ENCODE measurements at regions of chr17 and their contacts with region 1.

Region 1: DNA sequence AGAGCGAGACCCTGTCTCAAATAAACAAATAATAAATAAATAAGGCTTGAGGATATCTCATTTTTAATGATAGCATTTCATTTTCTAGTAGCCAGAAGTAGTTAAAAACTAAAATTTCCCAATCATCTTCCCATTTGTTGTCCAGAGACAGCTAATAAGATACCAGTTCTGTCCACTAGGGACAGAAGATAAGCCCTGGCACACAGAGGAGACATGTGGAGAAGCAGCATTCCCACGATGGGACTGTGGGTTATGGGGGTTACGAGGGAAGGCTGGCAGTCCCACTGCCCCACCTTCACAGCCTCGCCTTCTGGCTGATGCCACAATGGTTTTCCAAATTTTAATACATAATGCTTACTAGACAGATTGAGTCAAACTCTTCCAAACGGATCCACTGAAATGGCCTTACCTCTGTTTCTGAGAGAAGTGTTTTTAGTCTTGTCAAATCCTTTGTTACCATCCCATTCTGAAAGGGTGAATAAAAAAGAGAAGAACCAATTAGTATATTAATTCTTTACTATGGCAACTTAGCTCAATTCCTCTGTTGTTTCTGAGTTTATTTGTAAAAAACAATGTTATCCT is 44.2 kb downstream of the HELZ start:
- DNase-seq: no peak
- ATAC-seq: peak; percentile 67
- H3K4me3 ChIP-seq: no peak overlapping the region
- H3K27ac ChIP-seq: no peak overlapping the region
- H3K4me1 ChIP-seq: no peaks in the 10 kb centered on the region
- H3K27me3 ChIP-seq: no peaks in the 10 kb centered on the region
- CTCF ChIP-seq: peak; percentile 9 to 55 (median 39); a peak in 5 of 6 replicates
- EP300 ChIP-seq: no peak
- POLR2A ChIP-seq: no peak
- RAD21 ChIP-seq: no peak

Region 2: GRCh38 chr17:67210915-67211314 is 10.1 kb after region 1 on chr17:
- CTCF ChIA-PET with region 1: interaction called, 10 read pairs
- POLR2A ChIA-PET with region 1: interaction called, 3 read pairs
- RAD21 ChIA-PET with region 1: no interaction called
- SMC1A ChIA-PET with region 1: interaction called, 11 read pairs
- in situ Hi-C with region 1: no loop called
- intact Hi-C with region 1: no loop called
- DNase-seq: no peak
- ATAC-seq: no peak
- H3K4me3 ChIP-seq: no peak overlapping the region
- H3K27ac ChIP-seq: no peak overlapping the region
- H3K4me1 ChIP-seq: no peaks in the 10 kb centered on the region
- H3K27me3 ChIP-seq: no peaks in the 10 kb centered on the region
- CTCF ChIP-seq: no peak
- EP300 ChIP-seq: no peak
- POLR2A ChIP-seq: no peak
- RAD21 ChIP-seq: no peak

Region 3: DNA sequence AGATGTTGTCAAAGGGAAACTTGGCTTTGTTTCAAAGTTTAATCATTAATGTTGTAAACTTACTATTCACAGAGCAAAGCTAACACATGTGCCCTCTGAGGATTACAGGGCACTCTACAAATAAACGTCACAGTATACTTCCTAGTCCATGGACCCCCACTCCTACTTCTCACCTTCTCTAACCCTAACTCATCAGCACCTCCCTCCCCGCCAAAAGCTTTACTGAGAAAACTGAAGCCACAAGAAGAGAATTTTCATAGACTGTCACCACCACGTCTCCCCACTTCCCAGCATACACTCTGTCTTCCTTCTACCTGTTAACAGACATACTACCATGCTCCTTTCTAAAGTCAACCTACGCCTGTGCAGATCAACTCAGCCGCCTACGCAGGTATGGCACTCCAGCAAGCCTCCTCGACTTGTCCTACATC is 15.2 kb after region 1 on chr17:
- CTCF ChIA-PET with region 1: interaction called, 10 read pairs
- POLR2A ChIA-PET with region 1: interaction called, 3 read pairs
- RAD21 ChIA-PET with region 1: no interaction called
- SMC1A ChIA-PET with region 1: interaction called, 11 read pairs
- in situ Hi-C with region 1: no loop called
- intact Hi-C with region 1: no loop called
- DNase-seq: no peak
- ATAC-seq: peak; percentile 58
- H3K4me3 ChIP-seq: no peak overlapping the region
- H3K27ac ChIP-seq: no peak overlapping the region
- H3K4me1 ChIP-seq: no peaks in the 10 kb centered on the region
- H3K27me3 ChIP-seq: no peaks in the 10 kb centered on the region
- CTCF ChIP-seq: no peak
- EP300 ChIP-seq: no peak
- POLR2A ChIP-seq: no peak
- RAD21 ChIP-seq: no peak